Panc1 (cell line): ENCODE measurements at regions of chr3 and their contacts with region 1.

Region 1: DNA sequence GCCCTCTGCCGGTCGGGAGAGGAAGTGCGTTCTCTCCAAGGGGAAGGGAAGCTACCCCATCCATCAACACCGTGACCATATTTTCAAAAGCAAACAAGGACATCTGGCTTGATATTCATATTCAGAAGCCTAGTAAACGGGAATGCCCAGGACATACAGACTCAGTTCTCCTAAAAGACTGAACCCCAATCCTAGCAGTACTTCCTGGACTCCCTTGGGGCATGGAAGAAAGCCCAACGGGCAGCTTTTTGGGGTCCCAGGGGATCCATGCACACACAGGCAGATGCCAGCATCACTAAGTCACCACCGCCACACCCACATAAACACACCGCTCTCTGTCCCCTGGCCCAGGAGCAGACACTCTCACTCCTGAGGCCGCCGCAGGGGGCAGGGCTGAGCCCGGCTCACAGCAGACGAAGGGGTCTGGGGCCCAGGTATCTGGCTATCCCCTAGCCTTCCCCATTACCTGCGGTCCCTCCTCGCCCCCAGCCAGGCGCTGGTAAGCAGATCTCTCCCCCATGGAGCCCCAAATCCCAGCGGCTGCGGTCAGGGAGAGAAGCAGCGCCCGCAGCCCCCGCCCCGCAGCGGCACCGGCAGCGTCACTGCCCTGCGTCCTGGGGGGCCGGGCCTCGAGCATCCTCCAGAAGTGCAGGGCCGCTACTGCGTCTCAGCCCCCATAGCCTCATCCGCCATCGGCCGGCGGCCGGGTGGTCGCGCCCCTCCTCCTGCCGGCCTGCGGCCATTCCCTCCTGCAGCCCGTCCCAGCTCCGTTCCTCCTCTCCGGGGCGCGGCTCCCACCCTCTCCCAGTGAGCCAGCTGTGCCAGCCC is 13.4 kb downstream of the TNK2 start:
- DNase-seq: peak; percentile 88
- ATAC-seq: peak; percentile 79
- H3K4me3 ChIP-seq: peak overlapping the region; percentile 65 to 79
- H3K27ac ChIP-seq: peak overlapping the region; percentile 80
- H3K4me1 ChIP-seq: peaks cover 39% of the 10 kb centered on the region
- H3K27me3 ChIP-seq: no peaks in the 10 kb centered on the region
- CTCF ChIP-seq: peak; percentile 99

Region 2: GRCh38 chr3:195224156-195224972 is 670.6 kb before region 1 on chr3:
- CTCF ChIA-PET with region 1: no interaction called
- POLR2A ChIA-PET with region 1: interaction called, 14 read pairs
- in situ Hi-C with region 1: no loop called
- intact Hi-C with region 1: no loop called
- DNase-seq: no peak
- ATAC-seq: 0 out of 2 replicates have a peak, but pooled peaks have one; percentile 14
- H3K4me3 ChIP-seq: no peak overlapping the region
- H3K27ac ChIP-seq: no peak overlapping the region
- H3K4me1 ChIP-seq: no peaks in the 10 kb centered on the region
- H3K27me3 ChIP-seq: no peaks in the 10 kb centered on the region
- CTCF ChIP-seq: no peak

Region 3: DNA sequence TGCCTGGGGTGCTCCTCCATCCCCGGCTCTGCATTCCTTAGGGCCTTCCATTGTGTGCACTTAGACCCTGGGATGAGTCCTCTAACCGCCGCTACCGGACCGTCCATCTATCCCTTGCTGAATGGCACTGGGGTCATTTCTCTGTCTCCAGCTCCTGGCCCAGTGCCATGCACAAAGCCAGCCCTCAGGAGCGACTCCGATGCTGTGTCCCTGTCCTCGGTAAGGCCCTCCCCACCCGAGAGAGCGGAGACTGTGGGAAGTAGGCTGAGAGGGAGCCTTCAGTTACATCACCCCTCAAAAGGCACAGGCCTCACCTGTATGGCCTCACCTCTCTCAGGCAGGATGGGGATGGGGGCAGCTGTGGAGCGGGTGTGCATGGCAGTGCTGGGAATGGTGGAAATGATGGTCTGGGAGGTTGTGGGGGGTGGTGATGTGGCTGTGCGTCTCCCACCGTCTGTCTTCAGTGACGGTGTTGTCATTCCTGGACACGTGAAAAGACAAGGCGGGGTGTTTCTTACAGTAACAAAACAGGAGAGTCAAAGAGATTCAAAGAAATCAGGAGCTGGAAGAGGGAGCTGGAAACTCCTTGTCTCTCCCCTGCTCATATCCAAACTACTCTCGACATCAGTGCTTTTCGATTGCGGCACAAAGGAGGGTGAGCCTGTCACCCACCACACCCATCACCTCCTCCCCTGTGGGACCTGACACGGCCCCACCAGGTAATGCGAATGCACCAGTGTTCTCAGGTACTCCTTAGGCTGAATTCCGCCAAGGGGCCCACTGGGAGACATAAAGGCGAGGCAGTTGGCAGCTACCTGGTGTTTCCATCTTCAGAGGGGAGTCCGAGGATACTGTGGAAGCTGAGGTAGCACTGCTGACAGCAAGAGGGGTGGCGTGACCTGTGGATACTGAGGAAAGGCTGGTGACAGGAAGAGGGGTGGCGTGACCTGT is 116.7 kb before region 1 on chr3:
- CTCF ChIA-PET with region 1: no interaction called
- POLR2A ChIA-PET with region 1: no interaction called
- in situ Hi-C with region 1: no loop called
- intact Hi-C with region 1: no loop called
- DNase-seq: no peak
- ATAC-seq: no peak
- H3K4me3 ChIP-seq: no peak overlapping the region
- H3K27ac ChIP-seq: no peak overlapping the region
- H3K4me1 ChIP-seq: no peaks in the 10 kb centered on the region
- H3K27me3 ChIP-seq: no peaks in the 10 kb centered on the region
- CTCF ChIP-seq: no peak

Region 4: DNA sequence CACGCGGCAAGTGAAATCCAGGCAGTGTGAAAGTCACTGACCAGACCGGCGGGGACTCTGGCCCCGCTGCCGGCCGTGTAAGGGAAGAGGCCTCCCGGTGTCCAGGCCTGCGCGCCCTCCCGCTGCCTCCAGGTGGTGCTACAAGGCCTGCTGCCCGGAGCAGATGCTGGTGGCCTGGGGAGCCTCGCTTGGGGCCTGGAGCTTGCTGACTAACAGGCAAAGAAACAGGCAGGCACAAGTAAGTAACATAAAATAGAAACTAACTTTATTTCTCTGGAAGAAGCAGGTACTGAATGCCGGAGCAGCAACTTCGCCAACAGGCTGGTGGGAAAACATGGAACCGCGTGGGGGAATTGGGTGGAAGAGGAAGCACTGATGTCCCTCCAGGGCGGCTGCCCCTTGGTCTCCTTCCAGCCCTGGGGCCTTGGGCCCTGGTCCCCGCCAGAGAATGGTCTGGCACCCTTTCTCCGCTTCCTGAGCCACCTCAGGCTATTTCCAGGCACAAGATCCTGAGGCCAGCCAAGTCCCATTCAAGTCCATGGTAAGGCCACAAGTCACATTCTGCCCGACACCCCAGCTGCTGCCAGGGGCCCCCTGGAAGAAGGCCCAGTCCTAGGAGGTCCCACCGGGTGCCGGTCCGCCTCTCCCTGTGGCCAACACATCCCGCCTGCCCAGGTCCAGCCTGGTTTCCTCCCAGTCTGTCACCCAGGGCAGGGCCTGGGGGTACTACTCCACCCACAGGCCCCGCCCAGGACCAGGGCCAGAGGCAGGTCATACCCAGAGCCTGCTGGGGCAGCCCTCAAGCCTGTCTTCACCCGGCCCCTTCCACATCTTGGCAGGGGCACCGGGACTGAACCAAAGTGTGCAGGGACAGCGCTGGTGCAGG is 31.6 kb before region 1 on chr3:
- CTCF ChIA-PET with region 1: interaction called, 15 read pairs
- POLR2A ChIA-PET with region 1: interaction called, 6 read pairs
- in situ Hi-C with region 1: no loop called
- intact Hi-C with region 1: loop called (anchors 1 kb)
- DNase-seq: peak; percentile 38
- ATAC-seq: peak; percentile 96
- H3K4me3 ChIP-seq: no peak overlapping the region
- H3K27ac ChIP-seq: no peak overlapping the region
- H3K4me1 ChIP-seq: peaks cover 10% of the 10 kb centered on the region; the same call in 1 of the 2 replicates
- H3K27me3 ChIP-seq: no peaks in the 10 kb centered on the region
- CTCF ChIP-seq: peak; percentile 99

Region 5: DNA sequence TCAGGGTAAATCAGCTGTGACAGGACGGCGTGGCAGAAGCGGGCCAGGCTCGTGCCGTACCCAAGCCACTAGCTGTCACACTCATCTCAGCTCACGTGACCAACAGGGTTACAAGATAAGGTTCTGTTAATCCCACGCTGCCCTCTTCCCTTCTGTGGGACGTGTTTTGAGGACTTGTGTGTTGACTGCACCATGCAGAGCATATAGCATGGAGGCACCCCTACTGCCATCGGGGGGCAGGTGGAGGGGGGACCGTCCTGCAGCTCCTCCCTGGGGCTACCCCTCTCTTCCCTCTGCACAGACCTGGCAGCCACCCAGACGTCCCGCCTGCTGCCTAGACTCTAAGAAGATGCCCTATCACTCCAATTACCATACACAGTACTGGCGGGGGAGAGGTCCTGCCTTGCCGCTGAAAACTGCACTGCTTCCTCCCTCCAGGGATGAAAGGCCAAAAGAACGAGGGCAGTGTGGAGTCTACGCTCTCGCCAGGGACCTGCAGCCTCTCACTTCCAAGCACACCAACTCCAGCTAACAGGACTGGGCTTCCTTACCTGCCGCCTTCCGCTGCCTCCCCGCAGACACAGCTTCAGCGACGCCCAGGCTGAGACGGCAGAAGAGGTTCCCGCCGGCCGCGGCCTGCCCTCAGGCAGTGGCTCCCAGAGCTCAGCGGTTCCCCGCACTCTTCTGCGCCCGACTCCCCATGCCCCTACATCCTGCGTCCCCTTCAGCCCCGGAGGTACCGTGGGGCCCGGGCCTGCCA is 13.1 kb after region 1 on chr3 and contains the start of gene TNK2:
- CTCF ChIA-PET with region 1: interaction called, 11 read pairs
- POLR2A ChIA-PET with region 1: interaction called, 3 read pairs
- in situ Hi-C with region 1: no loop called
- intact Hi-C with region 1: no loop called
- DNase-seq: no peak
- ATAC-seq: peak; percentile 62
- H3K4me3 ChIP-seq: peak within 1 kb of the TSS; percentile 52 to 63
- H3K27ac ChIP-seq: peak within 1 kb of the TSS; percentile 71
- H3K4me1 ChIP-seq: peaks cover 55% of the 10 kb centered on the region
- H3K27me3 ChIP-seq: no peaks in the 10 kb centered on the region
- CTCF ChIP-seq: no peak
- total RNA-seq, gene TNK2: 72.3 TPM

Region 6: GRCh38 chr3:196219194-196219978 is 324.4 kb after region 1 on chr3:
- CTCF ChIA-PET with region 1: no interaction called
- POLR2A ChIA-PET with region 1: no interaction called
- in situ Hi-C with region 1: no loop called
- intact Hi-C with region 1: no loop called
- DNase-seq: no peak
- ATAC-seq: 0 out of 2 replicates have a peak, but pooled peaks have one; percentile 16
- H3K4me3 ChIP-seq: peak overlapping the region in 1 of 2 experiments; percentile 12; a peak in 1 of 4 replicates
- H3K27ac ChIP-seq: no peak overlapping the region
- H3K4me1 ChIP-seq: peaks cover 4% of the 10 kb centered on the region
- H3K27me3 ChIP-seq: no peaks in the 10 kb centered on the region
- CTCF ChIP-seq: no peak

Region 7: GRCh38 chr3:196585044-196585757 is 690.2 kb after region 1 on chr3:
- CTCF ChIA-PET with region 1: no interaction called
- POLR2A ChIA-PET with region 1: interaction called, 15 read pairs
- in situ Hi-C with region 1: no loop called
- intact Hi-C with region 1: no loop called
- DNase-seq: no peak
- ATAC-seq: no peak
- H3K4me3 ChIP-seq: no peak overlapping the region
- H3K27ac ChIP-seq: no peak overlapping the region
- H3K4me1 ChIP-seq: no peaks in the 10 kb centered on the region
- H3K27me3 ChIP-seq: no peaks in the 10 kb centered on the region
- CTCF ChIP-seq: no peak